AG04450 (cell line): ENCODE measurements at regions of chr1 and their contacts with region 1.

Region 1: GRCh38 chr1:84406346-84406861 is 8.1 kb downstream of the DNASE2B start:
- DNase-seq: no peak
- H3K4me3 ChIP-seq: no peak overlapping the region
- H3K27ac ChIP-seq: no peak overlapping the region
- H3K27me3 ChIP-seq: no peaks in the 10 kb centered on the region
- CTCF ChIP-seq: no peak

Region 2: GRCh38 chr1:84877592-84877991 is 471.2 kb after region 1 on chr1:
- CTCF ChIA-PET with region 1: no interaction called
- POLR2A ChIA-PET with region 1: interaction called, 14 read pairs
- DNase-seq: peak; percentile 46
- H3K4me3 ChIP-seq: no peak overlapping the region
- H3K27ac ChIP-seq: no peak overlapping the region
- H3K27me3 ChIP-seq: no peaks in the 10 kb centered on the region
- CTCF ChIP-seq: no peak